ENCODE measurements at regions of chr12 and their contacts with region 1.

Region 1: DNA sequence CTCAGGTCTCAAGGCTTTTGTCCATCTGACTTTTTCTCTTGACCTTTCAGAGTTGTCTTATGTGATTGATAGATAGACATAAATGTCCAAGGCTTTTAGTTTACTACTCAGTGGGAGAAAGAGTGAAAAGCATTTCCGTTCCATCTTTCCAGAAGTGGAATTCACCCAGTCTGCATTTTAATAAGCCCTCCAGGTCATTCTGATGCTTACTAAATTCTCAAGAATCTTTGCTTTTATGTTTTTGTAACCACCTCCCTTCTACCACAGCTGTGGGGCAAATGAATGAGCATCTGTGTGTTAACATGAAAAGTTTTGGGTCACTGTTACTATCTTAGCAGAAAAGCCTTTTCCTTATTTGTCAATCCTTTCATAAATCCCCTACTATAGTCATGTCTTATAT is 251.4 kb downstream of the LRIG3 start:
- DNase-seq: no peak
- ATAC-seq: no peak
- H3K4me3 ChIP-seq: no peak overlapping the region
- H3K4me3 Mint-ChIP-seq: no peak overlapping the region
- H3K27ac ChIP-seq: no peak overlapping the region
- H3K27ac Mint-ChIP-seq: no peak overlapping the region
- H3K4me1 ChIP-seq: no peaks in the 10 kb centered on the region
- H3K4me1 Mint-ChIP-seq: no peaks in the 10 kb centered on the region
- H3K27me3 ChIP-seq: no peaks in the 10 kb centered on the region
- H3K27me3 Mint-ChIP-seq: no peaks in the 10 kb centered on the region

Region 2: GRCh38 chr12:58395470-58395869 is 273.4 kb before region 1 on chr12:
- CTCF ChIA-PET with region 1: no interaction called
- POLR2A ChIA-PET with region 1: no interaction called
- DNase-seq: no peak
- ATAC-seq: no peak
- H3K4me3 ChIP-seq: no peak overlapping the region
- H3K4me3 Mint-ChIP-seq: no peak overlapping the region
- H3K27ac ChIP-seq: no peak overlapping the region
- H3K27ac Mint-ChIP-seq: no peak overlapping the region
- H3K4me1 ChIP-seq: no peaks in the 10 kb centered on the region
- H3K4me1 Mint-ChIP-seq: no peaks in the 10 kb centered on the region
- H3K27me3 ChIP-seq: no peaks in the 10 kb centered on the region
- H3K27me3 Mint-ChIP-seq: peaks cover 2 to 17% of the 10 kb centered on the region in 2 donors

Region 3: DNA sequence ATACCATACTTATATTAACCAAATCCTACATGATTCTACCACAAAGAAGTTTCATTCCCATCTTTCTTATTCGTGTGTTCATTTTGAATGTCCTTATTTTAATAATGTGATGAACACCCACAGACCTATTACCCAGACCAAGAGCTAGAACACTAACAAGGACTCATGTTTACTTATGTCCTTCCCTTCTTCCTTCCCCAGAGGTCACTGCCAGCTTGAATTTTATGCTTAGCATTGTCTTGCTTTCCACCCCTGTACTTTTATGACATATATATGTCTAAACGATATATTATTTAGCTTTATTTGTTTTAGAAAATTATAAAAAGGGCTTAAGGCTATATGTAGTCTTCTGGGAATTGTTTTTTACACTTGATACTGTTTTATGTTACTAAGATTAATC is 12.9 kb after region 1 on chr12:
- CTCF ChIA-PET with region 1: no interaction called
- POLR2A ChIA-PET with region 1: no interaction called
- DNase-seq: no peak
- ATAC-seq: no peak
- H3K4me3 ChIP-seq: no peak overlapping the region
- H3K4me3 Mint-ChIP-seq: no peak overlapping the region
- H3K27ac ChIP-seq: no peak overlapping the region
- H3K27ac Mint-ChIP-seq: no peak overlapping the region
- H3K4me1 ChIP-seq: no peaks in the 10 kb centered on the region
- H3K4me1 Mint-ChIP-seq: no peaks in the 10 kb centered on the region
- H3K27me3 ChIP-seq: no peaks in the 10 kb centered on the region
- H3K27me3 Mint-ChIP-seq: no peaks in the 10 kb centered on the region

Region 4: DNA sequence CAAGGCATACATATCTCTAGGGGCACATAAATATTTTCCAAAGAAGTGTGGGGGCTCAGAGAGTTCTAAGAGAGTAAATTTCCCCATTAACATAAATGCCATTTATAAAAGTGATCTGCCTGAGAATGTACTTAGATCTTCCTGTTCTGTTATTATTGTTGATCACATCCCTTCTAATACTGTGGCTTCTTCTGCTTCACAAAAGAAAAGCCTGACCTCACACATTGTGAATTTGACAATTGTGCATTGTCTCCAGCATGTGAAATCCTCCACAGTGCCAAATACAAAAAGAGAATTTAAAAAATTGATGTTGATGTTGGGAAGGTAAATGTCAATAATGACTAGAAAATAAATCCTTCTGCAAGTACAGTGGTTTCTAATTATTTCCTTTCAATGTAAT is 581.9 kb after region 1 on chr12:
- CTCF ChIA-PET with region 1: no interaction called
- POLR2A ChIA-PET with region 1: interaction called in 1 of 2 experiments, 11 read pairs
- DNase-seq: no peak
- ATAC-seq: no peak
- H3K4me3 ChIP-seq: no peak overlapping the region
- H3K4me3 Mint-ChIP-seq: no peak overlapping the region
- H3K27ac ChIP-seq: no peak overlapping the region
- H3K27ac Mint-ChIP-seq: no peak overlapping the region
- H3K4me1 ChIP-seq: no peaks in the 10 kb centered on the region
- H3K4me1 Mint-ChIP-seq: no peaks in the 10 kb centered on the region
- H3K27me3 ChIP-seq: no peaks in the 10 kb centered on the region
- H3K27me3 Mint-ChIP-seq: no peaks in the 10 kb centered on the region

Region 5: GRCh38 chr12:59268295-59268809 is 599.5 kb after region 1 on chr12:
- CTCF ChIA-PET with region 1: no interaction called
- POLR2A ChIA-PET with region 1: no interaction called
- DNase-seq: no peak
- ATAC-seq: no peak
- H3K4me3 ChIP-seq: no peak overlapping the region
- H3K4me3 Mint-ChIP-seq: no peak overlapping the region
- H3K27ac ChIP-seq: no peak overlapping the region
- H3K27ac Mint-ChIP-seq: no peak overlapping the region
- H3K4me1 ChIP-seq: no peaks in the 10 kb centered on the region
- H3K4me1 Mint-ChIP-seq: no peaks in the 10 kb centered on the region
- H3K27me3 ChIP-seq: no peaks in the 10 kb centered on the region
- H3K27me3 Mint-ChIP-seq: no peaks in the 10 kb centered on the region